Activated CD8-positive, alpha-beta T cell treated with anti-CD3 and anti-CD28 coated beads for 36 hours (primary cell): ENCODE measurements at regions of chr19 and their contacts with region 1.

Region 1: DNA sequence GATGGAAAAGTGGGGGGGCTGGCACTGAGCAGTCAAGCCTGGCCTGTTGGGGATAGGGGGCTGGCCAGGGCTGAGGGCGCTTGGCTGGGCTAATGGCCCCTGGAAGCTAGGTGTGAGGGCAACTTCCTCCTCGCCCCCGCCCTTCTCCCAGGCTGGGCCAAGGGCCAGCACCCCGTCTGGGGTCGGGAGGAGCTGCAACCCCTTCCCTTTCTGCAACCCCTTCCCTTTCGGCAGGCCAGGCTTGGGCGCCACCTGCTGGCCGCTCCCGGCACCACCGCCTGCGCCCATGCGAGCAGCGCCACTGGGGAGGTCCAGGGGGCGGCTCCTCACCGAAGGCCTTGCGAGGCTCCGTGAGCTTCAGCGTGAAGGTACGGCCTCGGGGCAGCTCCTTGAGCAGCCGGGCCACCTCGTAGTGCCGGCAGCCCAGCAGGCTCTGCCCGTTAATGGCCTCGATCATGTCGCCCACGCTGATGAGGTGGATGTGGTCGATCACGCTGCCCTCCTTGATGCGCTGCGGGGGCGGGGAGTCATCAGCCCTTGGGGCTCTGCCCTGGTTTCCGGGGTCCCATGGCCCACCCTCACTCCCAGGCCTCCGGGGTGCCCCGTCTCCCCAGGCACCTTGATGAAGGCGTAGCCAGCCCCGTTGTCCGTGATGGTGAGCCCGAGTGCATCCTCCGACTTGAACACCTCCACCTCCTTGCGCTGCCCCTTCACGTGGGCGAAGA is 5.0 kb upstream of the PTGER1 start:
- DNase-seq: peak; percentile 78
- ATAC-seq: peak; percentile 59
- H3K4me3 Mint-ChIP-seq: no peak overlapping the region
- H3K27ac Mint-ChIP-seq: no peak overlapping the region
- H3K4me1 Mint-ChIP-seq: peaks cover 16% of the 10 kb centered on the region
- H3K27me3 Mint-ChIP-seq: no peaks in the 10 kb centered on the region
- CTCF ChIP-seq: peak; percentile 98

Region 2: GRCh38 chr19:14136509-14137281 is 343.4 kb before region 1 on chr19 and contains the start of gene ASF1B:
- CTCF ChIA-PET with region 1: interaction called, 18 read pairs
- POLR2A ChIA-PET with region 1: no interaction called
- intact Hi-C with region 1: no loop called
- DNase-seq: peak; percentile 99
- ATAC-seq: peak; percentile 83
- H3K4me3 Mint-ChIP-seq: peak within 1 kb of the TSS; percentile 95
- H3K27ac Mint-ChIP-seq: peak within 1 kb of the TSS; percentile 98
- H3K4me1 Mint-ChIP-seq: peaks cover 36% of the 10 kb centered on the region
- H3K27me3 Mint-ChIP-seq: no peaks in the 10 kb centered on the region
- CTCF ChIP-seq: peak; percentile 67
- total RNA-seq, gene ASF1B: 53.5 to 55.3 TPM

Region 3: DNA sequence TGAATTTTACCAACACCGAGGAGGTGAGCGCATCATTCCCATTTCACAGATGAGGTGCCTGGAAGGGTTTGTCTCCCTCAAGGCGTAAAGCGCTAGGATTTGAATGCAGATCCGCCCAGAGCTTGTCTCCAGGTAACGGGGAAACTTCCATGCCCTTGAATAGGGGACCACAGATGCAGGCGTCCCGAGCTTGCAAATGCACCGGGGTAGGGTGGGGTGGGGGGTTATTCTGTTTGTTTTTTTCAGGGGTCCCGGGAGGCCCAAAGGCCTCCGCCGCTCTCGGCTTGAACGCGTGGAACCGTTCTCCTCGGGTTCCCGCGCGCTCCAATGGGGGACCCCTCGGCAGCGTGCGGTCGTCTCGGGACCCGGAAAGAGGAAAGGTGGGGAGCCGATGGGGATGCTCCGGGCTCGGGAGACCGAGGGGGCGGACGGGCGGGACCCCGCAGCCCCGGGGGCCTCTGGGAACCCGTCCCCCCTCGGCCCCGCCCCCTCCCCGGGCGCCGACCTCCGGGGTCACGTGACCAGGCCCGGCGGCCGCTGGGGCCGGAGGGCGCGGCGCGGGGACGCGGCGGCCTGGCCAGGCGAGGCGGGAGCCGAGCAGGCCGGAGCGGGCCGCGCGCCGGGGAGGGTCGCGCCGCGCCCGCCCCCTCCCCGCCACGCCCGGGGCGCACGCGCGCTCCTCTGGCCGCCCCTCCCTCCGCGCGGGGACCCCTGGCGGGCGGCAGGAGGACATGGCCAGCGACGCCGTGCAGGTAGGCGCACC is 47.2 kb before region 1 on chr19 and contains the start of gene PKN1:
- CTCF ChIA-PET with region 1: interaction called, 41 read pairs
- POLR2A ChIA-PET with region 1: interaction called, 3 read pairs
- intact Hi-C with region 1: loop called (anchors 5 kb)
- DNase-seq: peak; percentile 64
- ATAC-seq: peak; percentile 22
- H3K4me3 Mint-ChIP-seq: peak within 1 kb of the TSS; percentile 74
- H3K27ac Mint-ChIP-seq: peak within 1 kb of the TSS; percentile 77
- H3K4me1 Mint-ChIP-seq: peaks cover 26% of the 10 kb centered on the region
- H3K27me3 Mint-ChIP-seq: peaks cover 2% of the 10 kb centered on the region
- CTCF ChIP-seq: no peak
- total RNA-seq, gene PKN1: 172 to 192 TPM

Region 4: DNA sequence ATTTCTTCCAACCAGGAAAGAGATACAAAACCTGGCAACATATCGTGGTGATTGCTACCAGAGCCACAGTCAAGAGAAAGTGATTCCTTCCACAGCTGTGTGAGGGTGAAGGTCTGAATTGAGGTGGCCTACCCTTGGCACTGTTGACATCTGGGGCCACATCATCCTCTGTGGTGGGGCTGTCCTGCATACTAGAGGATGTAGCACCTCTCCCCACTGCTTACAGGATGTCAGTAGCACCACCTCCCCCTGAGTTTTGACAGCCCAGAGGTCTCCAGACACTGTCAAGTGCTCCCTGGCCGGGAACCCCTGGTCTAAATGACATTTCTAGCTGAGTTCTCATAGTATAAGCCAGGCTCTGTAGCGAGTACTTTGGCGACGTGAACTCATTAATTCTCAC is 20.4 kb before region 1 on chr19:
- CTCF ChIA-PET with region 1: interaction called, 20 read pairs
- POLR2A ChIA-PET with region 1: no interaction called
- intact Hi-C with region 1: no loop called
- DNase-seq: peak; percentile 72
- ATAC-seq: peak; percentile 99
- H3K4me3 Mint-ChIP-seq: no peak overlapping the region
- H3K27ac Mint-ChIP-seq: peak overlapping the region; percentile 65
- H3K4me1 Mint-ChIP-seq: peaks cover 9% of the 10 kb centered on the region
- H3K27me3 Mint-ChIP-seq: no peaks in the 10 kb centered on the region
- CTCF ChIP-seq: no peak

Region 5: DNA sequence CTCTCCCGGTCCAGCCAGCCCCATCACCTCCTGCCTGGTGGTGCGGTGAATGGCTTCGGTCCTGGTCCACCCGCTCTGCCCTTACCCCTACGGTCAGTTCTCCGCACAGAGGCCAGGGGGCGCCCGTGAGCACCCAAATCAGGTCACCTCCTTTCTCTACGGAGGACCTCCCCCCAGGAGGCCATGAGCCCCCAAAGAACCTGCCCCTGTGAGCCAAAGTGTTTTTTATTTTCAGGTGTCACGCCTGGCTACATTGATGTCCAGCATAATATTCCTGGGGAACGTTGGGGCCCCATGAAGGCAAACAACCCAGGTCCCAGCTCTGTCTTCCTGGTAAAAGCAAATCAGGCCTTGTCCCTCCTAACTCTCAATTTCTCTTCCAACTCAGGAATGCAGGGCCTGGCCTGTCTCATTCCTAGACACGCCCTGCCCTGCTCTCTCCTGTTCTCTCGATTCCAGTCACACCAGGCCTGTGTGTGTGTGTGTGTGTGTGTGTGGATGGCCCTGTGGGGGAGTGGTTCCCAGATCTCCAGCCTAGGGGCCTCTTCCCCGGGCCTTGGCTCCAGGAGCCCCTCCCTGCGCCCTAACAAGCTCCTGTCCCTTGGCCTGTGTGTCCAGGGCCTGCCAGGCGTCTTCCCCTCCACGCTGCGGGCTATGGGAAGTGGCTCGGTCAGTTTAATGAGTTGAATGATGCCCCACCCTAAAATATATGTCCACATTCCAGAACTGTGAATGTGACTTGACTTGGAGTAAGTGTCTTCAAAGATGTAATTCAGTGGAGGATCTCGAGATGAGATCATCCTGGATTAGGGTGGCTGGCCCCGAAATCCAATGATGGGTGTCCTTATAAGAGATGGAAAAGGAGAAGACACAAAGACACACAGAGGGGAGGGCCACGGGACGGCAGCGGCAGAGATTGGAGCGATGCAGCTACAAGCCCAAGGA is 25.6 kb after region 1 on chr19:
- CTCF ChIA-PET with region 1: interaction called, 11 read pairs
- POLR2A ChIA-PET with region 1: no interaction called
- intact Hi-C with region 1: no loop called
- DNase-seq: peak; percentile 85
- ATAC-seq: peak; percentile 87
- H3K4me3 Mint-ChIP-seq: no peak overlapping the region
- H3K27ac Mint-ChIP-seq: peak overlapping the region; percentile 69
- H3K4me1 Mint-ChIP-seq: peaks cover 40% of the 10 kb centered on the region
- H3K27me3 Mint-ChIP-seq: no peaks in the 10 kb centered on the region
- CTCF ChIP-seq: peak; percentile 88

Region 6: GRCh38 chr19:14577885-14578427 is 97.8 kb after region 1 on chr19:
- CTCF ChIA-PET with region 1: no interaction called
- POLR2A ChIA-PET with region 1: no interaction called
- intact Hi-C with region 1: no loop called
- DNase-seq: peak; percentile 38
- ATAC-seq: peak; percentile 26
- H3K4me3 Mint-ChIP-seq: no peak overlapping the region
- H3K27ac Mint-ChIP-seq: peak overlapping the region; percentile 13
- H3K4me1 Mint-ChIP-seq: peaks cover 18% of the 10 kb centered on the region
- H3K27me3 Mint-ChIP-seq: no peaks in the 10 kb centered on the region
- CTCF ChIP-seq: no peak